Activated naive CD8-positive, alpha-beta T cell treated with anti-CD3 and anti-CD28 coated beads, Interleukin-2, amount 10 ng/mL, durations not matched to agents 7 days and 5 days (primary cell): ENCODE measurements at regions of chr3 and their contacts with region 1.

Region 1: GRCh38 chr3:196739671-196740480 is at the start of gene PAK2:
- DNase-seq: peak; percentile 91
- ATAC-seq: peak; percentile 90
- H3K4me3 Mint-ChIP-seq: peak within 1 kb of the TSS; percentile 98
- H3K27ac Mint-ChIP-seq: peak within 1 kb of the TSS; percentile 96
- H3K4me1 Mint-ChIP-seq: peaks cover 19% of the 10 kb centered on the region
- H3K27me3 Mint-ChIP-seq: no peaks in the 10 kb centered on the region
- total RNA-seq, gene PAK2: 77.2 to 81.3 TPM

Region 2: GRCh38 chr3:196684548-196685407 is 55.1 kb before region 1 on chr3:
- POLR2A ChIA-PET with region 1: no interaction called
- DNase-seq: peak; percentile 60
- ATAC-seq: peak; percentile 94
- H3K4me3 Mint-ChIP-seq: peak overlapping the region; percentile 18
- H3K27ac Mint-ChIP-seq: peak overlapping the region; percentile 4
- H3K4me1 Mint-ChIP-seq: peaks cover 19% of the 10 kb centered on the region
- H3K27me3 Mint-ChIP-seq: peaks cover 8% of the 10 kb centered on the region

Region 3: GRCh38 chr3:196711838-196712513 is 27.9 kb before region 1 on chr3 and contains the starts of genes CEP19 and PIGX:
- POLR2A ChIA-PET with region 1: interaction called, 28 read pairs
- DNase-seq: peak; percentile 96
- ATAC-seq: peak; percentile 81
- H3K4me3 Mint-ChIP-seq: peak within 1 kb of the TSS; percentile 95
- H3K27ac Mint-ChIP-seq: peak within 1 kb of the TSS; percentile 95
- H3K4me1 Mint-ChIP-seq: peaks cover 24% of the 10 kb centered on the region
- H3K27me3 Mint-ChIP-seq: no peaks in the 10 kb centered on the region
- total RNA-seq, gene CEP19: 4.8 to 5.7 TPM
- total RNA-seq, gene PIGX: 32.6 to 33.5 TPM

Region 4: GRCh38 chr3:196774191-196774820 is 34.4 kb after region 1 on chr3:
- POLR2A ChIA-PET with region 1: no interaction called
- DNase-seq: no peak
- ATAC-seq: no peak
- H3K4me3 Mint-ChIP-seq: peak overlapping the region; percentile 2
- H3K27ac Mint-ChIP-seq: no peak overlapping the region
- H3K4me1 Mint-ChIP-seq: peaks cover 27% of the 10 kb centered on the region
- H3K27me3 Mint-ChIP-seq: no peaks in the 10 kb centered on the region

Region 5: GRCh38 chr3:196954832-196955231 is 215.0 kb after region 1 on chr3:
- POLR2A ChIA-PET with region 1: no interaction called
- DNase-seq: no peak
- ATAC-seq: no peak
- H3K4me3 Mint-ChIP-seq: no peak overlapping the region
- H3K27ac Mint-ChIP-seq: no peak overlapping the region
- H3K4me1 Mint-ChIP-seq: no peaks in the 10 kb centered on the region
- H3K27me3 Mint-ChIP-seq: peaks cover 21% of the 10 kb centered on the region